Activated naive CD4-positive, alpha-beta T cell treated with anti-CD3 and anti-CD28 coated beads for 36 hours (primary cell): ENCODE measurements at regions of chr12 and their contacts with region 1.

Region 1: GRCh38 chr12:32627976-32628375 is 51.1 kb upstream of the DNM1L start:
- DNase-seq: no peak
- H3K4me3 Mint-ChIP-seq: no peak overlapping the region
- H3K27ac Mint-ChIP-seq: no peak overlapping the region
- H3K4me1 Mint-ChIP-seq: no peaks in the 10 kb centered on the region
- H3K27me3 Mint-ChIP-seq: peaks cover 2% of the 10 kb centered on the region

Region 2: GRCh38 chr12:32612658-32613614 is 15.0 kb before region 1 on chr12:
- CTCF ChIA-PET with region 1: no interaction called
- intact Hi-C with region 1: loop called (anchors 1 kb)
- DNase-seq: no peak
- H3K4me3 Mint-ChIP-seq: no peak overlapping the region
- H3K27ac Mint-ChIP-seq: no peak overlapping the region
- H3K4me1 Mint-ChIP-seq: no peaks in the 10 kb centered on the region
- H3K27me3 Mint-ChIP-seq: no peaks in the 10 kb centered on the region

Region 3: DNA sequence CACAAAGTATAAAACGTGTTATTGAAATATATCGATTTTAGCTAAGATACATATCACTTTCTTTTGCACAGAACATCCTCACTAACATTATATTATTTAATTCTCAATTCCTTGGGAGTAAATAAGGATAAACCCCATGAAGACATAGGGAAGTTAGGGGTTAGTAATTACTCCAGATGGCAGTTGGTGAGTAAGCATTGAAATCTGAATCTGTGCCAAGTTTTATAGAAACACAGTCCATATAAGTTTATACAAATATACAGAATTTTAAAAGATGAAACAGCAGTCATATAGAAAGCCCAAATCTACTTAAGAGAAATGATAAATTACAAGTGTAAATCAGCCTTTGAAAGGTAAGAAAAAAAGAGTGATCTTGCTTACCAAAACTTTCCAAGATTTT is 1012.0 kb after region 1 on chr12:
- CTCF ChIA-PET with region 1: no interaction called
- intact Hi-C with region 1: no loop called
- DNase-seq: no peak
- H3K4me3 Mint-ChIP-seq: no peak overlapping the region
- H3K27ac Mint-ChIP-seq: no peak overlapping the region
- H3K4me1 Mint-ChIP-seq: no peaks in the 10 kb centered on the region
- H3K27me3 Mint-ChIP-seq: no peaks in the 10 kb centered on the region